Gastrocnemius medialis (tissue), 4 donors: ENCODE measurements at regions of chr4 and their contacts with region 1.

Region 1: GRCh38 chr4:37639551-37640285 is 46.5 kb downstream of the RELL1 start:
- DNase-seq: no peak
- ATAC-seq: peak in 1 of 2 donors; percentile 30
- H3K4me3 ChIP-seq: no peak overlapping the region
- H3K27ac ChIP-seq: no peak overlapping the region
- H3K4me1 ChIP-seq: peaks cover 0 to 6% of the 10 kb centered on the region in 2 donors
- H3K27me3 ChIP-seq: no peaks in the 10 kb centered on the region
- CTCF ChIP-seq: no peak
- POLR2A ChIP-seq: no peak

Region 2: DNA sequence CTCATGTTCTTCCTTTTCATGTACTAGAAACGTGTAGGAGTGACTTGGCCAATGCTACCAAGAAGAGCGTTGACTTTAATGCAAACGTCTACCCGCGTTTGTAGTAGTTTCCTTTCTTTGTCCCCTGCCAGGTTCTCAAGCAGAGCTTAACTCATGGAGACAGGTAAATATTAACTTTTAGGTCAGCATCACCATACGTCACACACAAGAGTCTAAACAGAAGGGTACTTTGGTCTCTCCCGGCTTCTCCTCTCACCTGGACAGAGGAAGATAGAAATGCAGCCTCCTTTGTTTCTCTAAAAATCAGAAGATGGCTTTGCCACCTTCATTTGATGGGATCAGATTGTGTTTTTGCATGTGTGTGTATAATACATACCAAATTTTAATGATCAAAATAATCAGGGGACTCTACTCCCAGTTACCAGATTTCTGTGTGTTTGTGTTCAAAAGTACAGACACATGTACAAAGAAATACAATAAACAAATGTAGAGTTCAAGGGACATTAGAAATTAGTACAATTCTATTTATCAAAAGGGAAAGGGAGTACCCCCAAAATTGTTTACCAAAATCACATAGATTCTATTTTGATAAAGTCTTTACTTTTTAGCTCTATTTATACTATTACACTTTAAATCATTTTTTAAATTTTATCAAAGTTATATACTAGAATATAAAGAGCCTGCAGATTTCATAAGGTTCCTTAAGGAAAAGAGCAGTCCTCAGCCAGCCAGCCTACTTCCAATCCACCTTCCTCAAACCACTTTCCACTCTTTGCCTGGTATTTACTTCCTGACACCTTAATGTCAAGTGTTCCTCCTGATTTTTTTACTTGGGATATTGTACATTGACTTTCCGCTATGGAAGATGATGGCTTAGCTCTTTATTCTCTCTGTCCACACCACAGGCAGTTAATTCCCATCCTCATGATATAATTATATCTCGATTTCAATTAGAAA is 149.0 kb before region 1 on chr4:
- in situ Hi-C with region 1: no loop called
- intact Hi-C with region 1: no loop called
- DNase-seq: no peak
- ATAC-seq: no peak
- H3K4me3 ChIP-seq: no peak overlapping the region
- H3K27ac ChIP-seq: no peak overlapping the region
- H3K4me1 ChIP-seq: no peaks in the 10 kb centered on the region
- H3K27me3 ChIP-seq: no peaks in the 10 kb centered on the region
- CTCF ChIP-seq: no peak
- POLR2A ChIP-seq: no peak

Region 3: GRCh38 chr4:37675587-37676290 is 36.0 kb after region 1 on chr4:
- in situ Hi-C with region 1: no loop called
- intact Hi-C with region 1: loop called (anchors 5 kb)
- DNase-seq: no peak
- ATAC-seq: no peak
- H3K4me3 ChIP-seq: no peak overlapping the region
- H3K27ac ChIP-seq: no peak overlapping the region
- H3K4me1 ChIP-seq: peaks cover 44 to 48% of the 10 kb centered on the region in 2 donors
- H3K27me3 ChIP-seq: no peaks in the 10 kb centered on the region
- CTCF ChIP-seq: no peak
- POLR2A ChIP-seq: no peak